Endothelial cell of umbilical vein (primary cell): ENCODE measurements at regions of chr1 and their contacts with region 1.

Region 1: GRCh38 chr1:220879076-220879508 is at the start of gene HLX:
- DNase-seq: peak; percentile 89
- H3K4me3 ChIP-seq: peak within 1 kb of the TSS; percentile 80 to 87 (median 82)
- H3K27ac ChIP-seq: peak within 1 kb of the TSS; percentile 35
- H3K4me1 ChIP-seq: peaks cover 41% of the 10 kb centered on the region
- H3K27me3 ChIP-seq: peaks cover 6 to 15% of the 10 kb centered on the region in 2 experiments
- CTCF ChIP-seq: no peak
- POLR2A ChIP-seq: no peak
- total RNA-seq, gene HLX: 33.5 and 39.1 TPM in 2 replicates

Region 2: DNA sequence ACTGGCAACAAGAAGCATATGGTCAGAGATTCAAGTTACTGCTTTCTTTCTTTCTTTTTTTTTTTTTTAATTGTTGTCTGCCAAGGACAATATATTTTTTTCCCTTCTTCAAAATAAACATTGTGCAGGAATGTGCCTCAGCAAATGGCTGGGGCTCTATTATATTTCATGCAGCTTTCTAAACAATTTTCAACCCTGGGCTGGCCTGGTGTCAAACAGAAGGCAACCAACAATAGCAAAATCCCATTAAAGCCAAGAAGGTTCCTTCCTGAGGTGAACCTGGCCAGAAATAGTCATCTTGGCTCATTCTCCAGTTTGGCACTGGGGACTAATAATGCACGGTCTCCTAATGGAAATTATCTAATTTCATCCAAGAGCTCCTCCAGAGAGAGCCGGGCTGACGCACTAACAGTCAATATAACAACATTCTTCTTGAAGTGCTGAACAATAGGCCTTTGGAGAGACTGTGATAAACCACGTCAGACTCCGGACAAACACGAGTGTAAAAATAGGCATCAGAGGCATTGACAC is 35.5 kb before region 1 on chr1:
- CTCF ChIA-PET with region 1: interaction called, 8 read pairs
- POLR2A ChIA-PET with region 1: no interaction called
- dilution Hi-C with region 1: no loop called
- intact Hi-C with region 1: loop called (anchors 1 kb)
- DNase-seq: peak; percentile 99
- H3K4me3 ChIP-seq: no peak overlapping the region
- H3K27ac ChIP-seq: peak overlapping the region; percentile 65
- H3K4me1 ChIP-seq: peaks cover 13% of the 10 kb centered on the region
- H3K27me3 ChIP-seq: peaks cover 0 to 3% of the 10 kb centered on the region in 2 experiments
- CTCF ChIP-seq: no peak
- POLR2A ChIP-seq: no peak

Region 3: DNA sequence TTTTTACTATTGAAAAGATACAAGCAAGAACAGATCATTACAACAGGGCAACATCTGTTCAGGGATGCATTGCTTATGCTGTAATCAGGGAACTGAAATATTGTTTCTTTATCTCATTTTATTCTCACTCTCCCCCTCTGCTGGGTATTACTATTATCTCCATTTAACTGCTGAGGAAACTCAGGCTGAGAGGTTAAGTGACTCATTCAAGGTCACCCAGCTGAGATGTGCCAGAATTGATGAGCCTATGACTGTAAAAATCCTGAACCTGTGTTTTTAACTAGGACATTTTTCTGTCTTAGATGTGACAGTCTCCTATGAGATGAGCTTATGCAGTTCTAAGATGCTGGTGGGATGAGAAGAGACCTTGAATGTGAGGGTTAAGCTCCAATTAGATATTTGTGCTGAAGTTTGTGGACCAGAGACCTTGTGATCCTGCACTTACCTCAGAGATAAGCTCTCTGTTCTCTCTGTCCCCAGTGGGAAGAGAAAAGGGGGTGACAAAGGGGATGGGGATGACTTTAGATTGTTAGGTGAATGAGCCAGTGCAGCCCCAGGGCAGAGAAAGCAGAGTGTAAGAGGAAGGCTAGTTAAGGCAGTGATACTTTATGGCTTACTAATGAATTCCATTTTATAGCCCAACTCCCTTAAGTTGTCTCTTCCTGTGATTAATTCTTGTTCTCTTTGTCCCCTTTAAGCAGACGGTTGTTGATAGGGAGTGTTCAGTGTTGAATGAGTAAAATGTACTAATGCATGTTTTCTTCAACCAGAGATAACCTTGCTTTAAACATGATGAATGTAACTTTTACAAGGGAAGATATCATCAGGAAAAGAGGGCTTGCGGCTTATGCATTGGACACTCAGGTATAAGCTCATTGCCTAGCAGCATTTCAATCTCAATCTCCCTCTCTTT is 111.6 kb after region 1 on chr1:
- CTCF ChIA-PET with region 1: interaction called, 4 read pairs
- POLR2A ChIA-PET with region 1: no interaction called
- dilution Hi-C with region 1: no loop called
- intact Hi-C with region 1: loop called (anchors 1 kb)
- DNase-seq: peak; percentile 82
- H3K4me3 ChIP-seq: no peak overlapping the region
- H3K27ac ChIP-seq: peak overlapping the region; percentile 24
- H3K4me1 ChIP-seq: peaks cover 15% of the 10 kb centered on the region
- H3K27me3 ChIP-seq: no peaks in the 10 kb centered on the region
- CTCF ChIP-seq: peak in 1 of 2 donors; percentile 17
- POLR2A ChIP-seq: no peak

Region 4: GRCh38 chr1:221161571-221162041 is 282.5 kb after region 1 on chr1:
- CTCF ChIA-PET with region 1: interaction called, 4 read pairs
- POLR2A ChIA-PET with region 1: no interaction called
- dilution Hi-C with region 1: no loop called
- intact Hi-C with region 1: loop called (anchors 2 kb)
- DNase-seq: peak; percentile 94
- H3K4me3 ChIP-seq: no peak overlapping the region
- H3K27ac ChIP-seq: peak overlapping the region; percentile 34
- H3K4me1 ChIP-seq: peaks cover 40% of the 10 kb centered on the region
- H3K27me3 ChIP-seq: no peaks in the 10 kb centered on the region
- CTCF ChIP-seq: no peak
- POLR2A ChIP-seq: peak; percentile 27

Region 5: DNA sequence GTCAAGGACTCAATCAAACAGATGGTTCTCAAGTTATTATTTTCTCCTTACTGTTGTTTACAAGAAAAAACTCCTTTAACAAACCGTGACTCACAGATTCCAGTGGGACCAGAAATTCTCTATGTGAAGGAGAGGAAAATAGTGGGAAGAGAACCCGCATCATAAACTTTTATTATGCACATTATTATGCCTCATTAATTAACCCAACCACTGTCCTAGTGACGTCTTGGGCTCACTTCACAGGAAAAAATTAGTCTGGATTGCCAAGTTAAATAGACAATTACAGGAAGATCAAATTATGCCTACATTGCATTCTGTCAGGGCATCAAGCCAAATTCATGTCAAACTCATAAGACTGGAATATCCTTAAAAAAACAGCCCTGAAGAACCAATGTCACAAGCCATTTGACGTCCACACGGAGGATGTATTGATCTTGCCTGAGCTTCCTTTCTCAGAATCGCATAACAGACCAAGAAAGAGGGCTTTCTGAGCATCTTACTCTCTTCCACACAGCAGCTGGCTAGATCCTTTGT is 515.0 kb after region 1 on chr1:
- CTCF ChIA-PET with region 1: interaction called, 6 read pairs
- POLR2A ChIA-PET with region 1: interaction called, 4 read pairs
- dilution Hi-C with region 1: no loop called
- intact Hi-C with region 1: loop called (anchors 1 kb)
- DNase-seq: peak; percentile 99
- H3K4me3 ChIP-seq: no peak overlapping the region
- H3K27ac ChIP-seq: peak overlapping the region; percentile 77
- H3K4me1 ChIP-seq: peaks cover 28% of the 10 kb centered on the region
- H3K27me3 ChIP-seq: peaks cover 2 to 3% of the 10 kb centered on the region in 2 experiments
- CTCF ChIP-seq: no peak
- POLR2A ChIP-seq: no peak

Region 6: GRCh38 chr1:221419513-221420088 is 540.5 kb after region 1 on chr1:
- CTCF ChIA-PET with region 1: interaction called, 3 read pairs
- POLR2A ChIA-PET with region 1: interaction called, 3 read pairs
- dilution Hi-C with region 1: no loop called
- intact Hi-C with region 1: loop called (anchors 1 kb)
- DNase-seq: peak; percentile 60
- H3K4me3 ChIP-seq: no peak overlapping the region
- H3K27ac ChIP-seq: no peak overlapping the region
- H3K4me1 ChIP-seq: peaks cover 24% of the 10 kb centered on the region
- H3K27me3 ChIP-seq: no peaks in the 10 kb centered on the region
- CTCF ChIP-seq: no peak
- POLR2A ChIP-seq: no peak

Region 7: GRCh38 chr1:221829327-221830015 is 950.4 kb after region 1 on chr1:
- CTCF ChIA-PET with region 1: no interaction called
- POLR2A ChIA-PET with region 1: no interaction called
- dilution Hi-C with region 1: no loop called
- intact Hi-C with region 1: loop called (anchors 1 kb)
- DNase-seq: peak; percentile 93
- H3K4me3 ChIP-seq: no peak overlapping the region
- H3K27ac ChIP-seq: peak overlapping the region; percentile 63
- H3K4me1 ChIP-seq: peaks cover 58% of the 10 kb centered on the region
- H3K27me3 ChIP-seq: no peaks in the 10 kb centered on the region
- CTCF ChIP-seq: no peak
- POLR2A ChIP-seq: no peak